Calu3 (cell line): ENCODE measurements at regions of chrX and their contacts with region 1.

Region 1: GRCh38 chrX:110462957-110463356 is 104.3 kb downstream of the RTL9 start:
- DNase-seq: peak; percentile 2
- H3K4me3 Mint-ChIP-seq: no peak overlapping the region
- H3K27ac Mint-ChIP-seq: no peak overlapping the region
- H3K4me1 Mint-ChIP-seq: no peaks in the 10 kb centered on the region
- H3K27me3 Mint-ChIP-seq: peaks cover 25% of the 10 kb centered on the region
- CTCF ChIP-seq: no peak

Region 2: GRCh38 chrX:110412971-110413721 is 49.8 kb before region 1 on chrX:
- CTCF ChIA-PET with region 1: no interaction called
- intact Hi-C with region 1: no loop called
- DNase-seq: peak; percentile 73
- H3K4me3 Mint-ChIP-seq: no peak overlapping the region
- H3K27ac Mint-ChIP-seq: no peak overlapping the region
- H3K4me1 Mint-ChIP-seq: peaks cover 18% of the 10 kb centered on the region
- H3K27me3 Mint-ChIP-seq: no peaks in the 10 kb centered on the region
- CTCF ChIP-seq: peak; percentile 83

Region 3: DNA sequence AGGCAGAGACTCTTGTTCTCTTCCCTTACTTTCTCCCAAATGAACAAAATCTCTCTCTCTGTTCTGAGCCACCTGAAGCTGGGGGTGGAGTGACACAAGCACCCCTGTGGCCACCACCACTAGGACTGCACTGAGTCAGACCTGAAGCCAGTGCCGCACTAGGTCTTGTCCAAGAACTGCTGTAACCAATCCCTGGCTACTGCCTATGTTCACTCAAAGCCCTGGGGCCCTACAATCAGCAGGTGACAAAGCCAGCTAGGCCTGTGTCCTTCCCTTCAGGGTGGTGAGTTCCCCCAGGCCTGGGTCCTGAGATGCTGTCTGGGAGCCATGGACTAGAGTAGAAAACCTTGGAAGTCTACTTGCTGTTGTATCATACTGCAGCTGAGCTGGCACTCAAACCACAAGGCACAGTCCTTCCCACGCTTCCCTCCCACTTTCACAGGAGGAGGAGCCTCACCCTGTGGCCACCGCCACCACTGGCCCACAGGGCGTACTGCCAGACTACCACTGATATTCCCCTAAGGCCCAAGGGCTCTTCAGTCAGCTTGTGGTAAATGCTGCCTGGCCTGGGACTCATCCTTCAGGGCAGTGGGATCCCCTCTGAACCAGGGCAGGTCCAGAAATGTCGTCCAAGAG is 14.8 kb after region 1 on chrX:
- CTCF ChIA-PET with region 1: no interaction called
- intact Hi-C with region 1: no loop called
- DNase-seq: no peak
- H3K4me3 Mint-ChIP-seq: no peak overlapping the region
- H3K27ac Mint-ChIP-seq: no peak overlapping the region
- H3K4me1 Mint-ChIP-seq: no peaks in the 10 kb centered on the region
- H3K27me3 Mint-ChIP-seq: peaks cover 31% of the 10 kb centered on the region
- CTCF ChIP-seq: no peak

Region 4: GRCh38 chrX:110588164-110588563 is 125.2 kb after region 1 on chrX:
- CTCF ChIA-PET with region 1: no interaction called
- intact Hi-C with region 1: loop called (anchors 2 kb)
- DNase-seq: no peak
- H3K4me3 Mint-ChIP-seq: no peak overlapping the region
- H3K27ac Mint-ChIP-seq: no peak overlapping the region
- H3K4me1 Mint-ChIP-seq: no peaks in the 10 kb centered on the region
- H3K27me3 Mint-ChIP-seq: peaks cover 7% of the 10 kb centered on the region
- CTCF ChIP-seq: no peak

Region 5: DNA sequence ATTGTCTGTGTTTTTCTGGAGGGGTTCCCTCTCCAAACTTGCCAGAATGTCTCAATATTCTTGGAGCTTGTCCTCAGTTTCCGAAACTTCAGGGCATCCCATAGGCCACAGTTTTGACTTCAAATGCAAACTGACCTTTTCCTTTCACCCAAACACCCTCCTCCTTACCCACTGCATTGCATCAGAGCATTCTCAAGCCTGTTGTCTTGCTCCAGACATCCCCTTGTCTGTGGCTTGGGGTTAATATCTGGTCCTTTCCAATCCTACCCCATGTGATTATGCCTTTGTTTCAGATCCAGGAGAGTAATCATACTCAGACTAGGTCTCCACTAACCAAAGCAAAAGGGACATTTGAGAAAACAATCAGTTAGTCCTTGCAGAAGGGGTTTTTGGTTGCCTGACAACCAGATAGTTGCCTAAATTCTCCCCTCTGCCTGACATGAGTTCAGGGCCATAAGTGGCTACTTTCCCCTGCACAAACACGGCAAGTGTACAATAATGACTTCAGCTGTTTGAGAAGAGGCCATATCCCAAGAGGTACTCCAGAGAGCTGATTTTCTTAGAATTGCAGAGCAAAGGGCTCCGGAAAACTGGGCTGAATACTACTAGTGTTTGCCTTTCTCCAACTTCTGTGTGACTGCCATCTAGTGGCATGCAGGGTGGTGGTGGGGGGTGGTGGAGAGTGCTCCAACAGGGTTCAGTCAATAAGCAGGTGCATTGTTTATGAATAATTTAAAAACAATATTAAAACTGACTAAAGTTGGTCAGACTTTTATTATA is 202.5 kb after region 1 on chrX:
- CTCF ChIA-PET with region 1: interaction called, 3 read pairs
- intact Hi-C with region 1: loop called (anchors 1 kb)
- DNase-seq: peak; percentile 69
- H3K4me3 Mint-ChIP-seq: no peak overlapping the region
- H3K27ac Mint-ChIP-seq: no peak overlapping the region
- H3K4me1 Mint-ChIP-seq: no peaks in the 10 kb centered on the region
- H3K27me3 Mint-ChIP-seq: peaks cover 10% of the 10 kb centered on the region
- CTCF ChIP-seq: peak; percentile 45